CD4-positive, alpha-beta T cell (primary cell): ENCODE measurements at regions of chr5 and their contacts with region 1.

Region 1: GRCh38 chr5:27124590-27124989 is 86.2 kb upstream of the CDH9 start:
- DNase-seq: no peak
- ATAC-seq: no peak
- H3K4me3 ChIP-seq: no peak overlapping the region
- H3K4me3 Mint-ChIP-seq: no peak overlapping the region
- H3K27ac ChIP-seq: no peak overlapping the region
- H3K27ac Mint-ChIP-seq: no peak overlapping the region
- H3K4me1 ChIP-seq: no peaks in the 10 kb centered on the region
- H3K4me1 Mint-ChIP-seq: no peaks in the 10 kb centered on the region
- H3K27me3 ChIP-seq: no peaks in the 10 kb centered on the region
- H3K27me3 Mint-ChIP-seq: no peaks in the 10 kb centered on the region
- CTCF ChIP-seq: no peak

Region 2: DNA sequence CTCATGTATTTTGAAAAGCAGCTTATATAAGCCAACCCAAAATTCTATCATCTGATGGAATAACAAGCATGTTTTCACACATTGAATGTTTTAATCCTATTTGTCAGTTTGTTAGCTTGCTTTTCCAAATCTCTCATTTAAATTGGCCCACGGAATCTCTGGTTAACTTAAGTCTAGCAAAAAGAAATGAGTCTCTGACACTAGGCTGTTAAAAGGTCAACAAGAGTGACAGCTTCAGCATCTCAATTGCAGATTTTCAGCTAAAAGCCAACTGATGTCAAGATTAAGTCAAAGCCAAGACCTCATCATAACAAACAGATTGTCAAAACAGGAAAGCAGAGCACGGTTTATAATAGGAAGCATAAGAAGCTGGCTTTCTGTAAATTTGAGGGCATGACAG is 36.8 kb before region 1 on chr5:
- CTCF ChIA-PET with region 1: no interaction called
- POLR2A ChIA-PET with region 1: no interaction called
- intact Hi-C with region 1: loop called in 1 of 2 experiments (anchors 2 kb)
- DNase-seq: no peak
- ATAC-seq: no peak
- H3K4me3 ChIP-seq: no peak overlapping the region
- H3K4me3 Mint-ChIP-seq: no peak overlapping the region
- H3K27ac ChIP-seq: no peak overlapping the region
- H3K27ac Mint-ChIP-seq: no peak overlapping the region
- H3K4me1 ChIP-seq: no peaks in the 10 kb centered on the region
- H3K4me1 Mint-ChIP-seq: no peaks in the 10 kb centered on the region
- H3K27me3 ChIP-seq: no peaks in the 10 kb centered on the region
- H3K27me3 Mint-ChIP-seq: no peaks in the 10 kb centered on the region
- CTCF ChIP-seq: no peak